ENCODE measurements at regions of chr15 and their contacts with region 1.

Region 1: GRCh38 chr15:85723960-85724945 is 70.5 kb downstream of the KLHL25 start:
- DNase-seq: no peak

Region 2: DNA sequence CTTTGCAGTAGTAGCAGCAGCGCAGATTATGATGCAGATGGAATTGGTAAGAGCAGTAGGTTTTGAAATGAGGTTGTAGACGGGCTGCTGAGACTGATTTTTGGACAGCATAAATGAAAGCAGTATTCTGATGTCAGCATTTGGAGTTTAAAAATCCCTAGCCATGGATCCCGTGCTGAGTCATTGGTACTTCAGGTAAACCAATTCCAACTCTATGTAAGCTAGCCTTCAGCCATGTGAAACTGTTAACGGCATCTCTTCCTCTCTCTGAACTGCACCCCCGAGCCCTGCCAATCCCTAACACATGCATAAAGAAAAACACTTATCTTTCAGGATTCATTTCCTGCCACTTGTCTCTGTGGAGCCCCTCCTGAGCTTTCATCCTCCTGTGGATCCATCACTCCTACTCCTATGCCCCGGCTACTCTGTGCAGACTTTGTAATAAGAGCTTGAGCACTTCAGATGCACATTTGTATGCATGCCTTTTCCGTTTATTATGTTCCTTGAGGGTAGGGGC is 224.8 kb before region 1 on chr15:
- intact Hi-C with region 1: loop called (anchors 5 kb)
- DNase-seq: no peak

Region 3: GRCh38 chr15:86691091-86691663 is 966.9 kb after region 1 on chr15:
- intact Hi-C with region 1: no loop called
- DNase-seq: no peak

Measured in cardiac septum (tissue), 1 donor.